CD4-positive, alpha-beta T cell (primary cell): ENCODE measurements at regions of chr4 and their contacts with region 1.

Region 1: DNA sequence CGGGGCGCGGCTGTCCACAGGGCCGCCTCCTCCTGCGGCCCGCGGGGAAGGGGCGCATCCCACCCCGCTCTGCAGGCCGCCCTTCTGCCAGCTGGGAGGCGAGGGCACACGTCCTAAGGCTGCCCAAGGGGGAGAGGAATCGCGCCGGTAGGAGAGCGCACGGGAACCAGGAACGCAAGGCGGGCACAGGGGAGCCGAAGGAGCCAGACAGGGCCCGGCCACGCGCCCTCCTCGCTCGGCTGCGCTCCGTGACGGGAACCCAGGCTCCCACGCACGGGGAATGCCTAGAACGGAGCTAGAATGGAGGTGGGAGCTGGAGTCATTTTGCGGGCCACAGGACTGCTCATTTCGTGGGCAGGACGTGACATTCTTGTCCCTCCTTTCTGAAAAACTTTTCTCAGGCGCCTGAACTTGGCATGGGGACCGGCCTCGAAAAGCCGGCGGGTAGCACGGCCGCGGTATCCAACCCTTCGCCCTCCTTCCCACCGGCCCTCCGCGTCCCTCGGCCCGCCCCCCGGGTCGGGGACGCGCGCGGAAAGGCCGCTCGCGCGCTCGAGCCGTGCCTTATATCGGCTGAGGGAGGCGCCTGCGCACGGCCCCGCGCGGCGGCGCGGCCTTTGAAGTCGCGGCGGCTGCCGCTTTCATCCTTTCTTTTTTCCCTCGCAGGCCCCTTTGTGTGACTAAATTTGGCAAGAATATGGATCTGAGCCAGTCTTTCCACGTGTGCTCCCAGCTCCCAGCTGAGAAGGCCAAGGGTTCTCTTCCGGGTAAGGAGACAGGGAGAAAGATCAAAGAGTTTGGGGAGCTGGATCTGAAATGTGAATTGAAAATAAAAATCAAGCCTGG is 4.2 kb upstream of the LEF1 start:
- DNase-seq: peak; percentile 51 to 87 (median 70)
- ATAC-seq: peak; percentile 39
- H3K4me3 ChIP-seq: peak overlapping the region; percentile 85
- H3K4me3 Mint-ChIP-seq: peak overlapping the region; percentile 93
- H3K27ac ChIP-seq: peak overlapping the region; percentile 46 to 91
- H3K27ac Mint-ChIP-seq: peak overlapping the region; percentile 88
- H3K4me1 ChIP-seq: peaks cover 50% of the 10 kb centered on the region
- H3K4me1 Mint-ChIP-seq: peaks cover 67% of the 10 kb centered on the region
- H3K27me3 ChIP-seq: peaks cover 7 to 11% of the 10 kb centered on the region in 2 experiments
- H3K27me3 Mint-ChIP-seq: peaks cover 9% of the 10 kb centered on the region
- CTCF ChIP-seq: no peak

Region 2: DNA sequence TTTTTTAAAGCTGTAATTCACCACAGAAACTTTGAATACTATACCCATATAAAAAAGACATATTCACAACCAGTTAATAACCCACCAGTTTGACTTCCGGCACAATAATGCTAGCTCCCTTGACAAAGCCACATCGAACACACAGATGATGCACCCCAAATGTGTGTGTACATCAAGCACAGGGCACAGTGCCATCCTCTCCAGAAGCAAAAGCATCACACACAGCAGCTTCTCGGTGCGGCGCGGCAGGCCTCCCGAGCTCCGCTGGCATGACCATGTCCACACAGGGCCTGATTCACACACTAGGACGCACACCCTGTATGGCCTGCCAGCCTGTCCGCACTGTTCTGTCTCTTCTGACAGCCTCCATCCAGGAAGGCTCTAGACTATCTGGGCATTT is 92.2 kb before region 1 on chr4:
- CTCF ChIA-PET with region 1: interaction called, 3 read pairs
- POLR2A ChIA-PET with region 1: interaction called, 13 read pairs
- intact Hi-C with region 1: no loop called
- DNase-seq: peak; percentile 35 to 77 (median 62)
- ATAC-seq: peak; percentile 84
- H3K4me3 ChIP-seq: no peak overlapping the region
- H3K4me3 Mint-ChIP-seq: peak overlapping the region; percentile 77
- H3K27ac ChIP-seq: peak overlapping the region in 1 of 2 donors; percentile 68
- H3K27ac Mint-ChIP-seq: peak overlapping the region; percentile 95
- H3K4me1 ChIP-seq: peaks cover 14% of the 10 kb centered on the region
- H3K4me1 Mint-ChIP-seq: peaks cover 78% of the 10 kb centered on the region
- H3K27me3 ChIP-seq: no peaks in the 10 kb centered on the region
- H3K27me3 Mint-ChIP-seq: no peaks in the 10 kb centered on the region
- CTCF ChIP-seq: no peak

Region 3: DNA sequence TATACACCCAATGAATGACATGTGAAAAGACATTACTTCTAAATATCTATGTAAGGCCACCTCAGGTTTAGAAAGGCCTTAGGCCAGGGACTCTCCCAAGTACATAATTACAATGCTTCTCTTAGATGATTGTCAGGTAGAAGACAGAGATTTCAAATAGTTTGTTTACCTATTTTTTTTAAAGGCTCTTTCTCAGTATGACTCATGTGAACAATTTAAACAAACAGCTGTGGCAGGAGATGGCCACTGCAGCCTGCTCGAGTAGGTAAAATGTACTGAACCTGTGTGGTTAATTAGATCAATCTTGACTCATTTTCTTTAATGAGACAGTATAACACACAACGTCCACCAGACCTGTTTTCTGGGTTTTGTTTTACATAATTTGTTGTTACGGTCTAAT is 54.5 kb before region 1 on chr4:
- CTCF ChIA-PET with region 1: interaction called, 3 read pairs
- POLR2A ChIA-PET with region 1: interaction called, 65 read pairs
- intact Hi-C with region 1: loop called (anchors 2 to 10 kb)
- DNase-seq: peak in 8 of 14 experiments; percentile 31 to 76 (median 50)
- ATAC-seq: peak; percentile 61
- H3K4me3 ChIP-seq: no peak overlapping the region
- H3K4me3 Mint-ChIP-seq: peak overlapping the region; percentile 72
- H3K27ac ChIP-seq: peak overlapping the region; percentile 58 to 89
- H3K27ac Mint-ChIP-seq: peak overlapping the region; percentile 92
- H3K4me1 ChIP-seq: peaks cover 49% of the 10 kb centered on the region
- H3K4me1 Mint-ChIP-seq: peaks cover 95% of the 10 kb centered on the region
- H3K27me3 ChIP-seq: no peaks in the 10 kb centered on the region
- H3K27me3 Mint-ChIP-seq: no peaks in the 10 kb centered on the region
- CTCF ChIP-seq: no peak

Region 4: GRCh38 chr4:108155373-108155772 is 17.6 kb before region 1 on chr4:
- CTCF ChIA-PET with region 1: interaction called, 7 read pairs
- POLR2A ChIA-PET with region 1: interaction called, 148 read pairs
- intact Hi-C with region 1: no loop called
- DNase-seq: peak in 6 of 14 experiments; percentile 40 to 79 (median 56)
- ATAC-seq: peak; percentile 62
- H3K4me3 ChIP-seq: peak overlapping the region; percentile 24
- H3K4me3 Mint-ChIP-seq: peak overlapping the region; percentile 87
- H3K27ac ChIP-seq: peak overlapping the region; percentile 10 to 61
- H3K27ac Mint-ChIP-seq: peak overlapping the region; percentile 79
- H3K4me1 ChIP-seq: peaks cover 37% of the 10 kb centered on the region
- H3K4me1 Mint-ChIP-seq: peaks cover 89% of the 10 kb centered on the region
- H3K27me3 ChIP-seq: no peaks in the 10 kb centered on the region
- H3K27me3 Mint-ChIP-seq: no peaks in the 10 kb centered on the region
- CTCF ChIP-seq: peak; percentile 44

Region 5: GRCh38 chr4:108355186-108355901 is 182.4 kb after region 1 on chr4:
- CTCF ChIA-PET with region 1: no interaction called
- POLR2A ChIA-PET with region 1: interaction called, 16 read pairs
- intact Hi-C with region 1: loop called in 1 of 2 experiments (anchors 2 kb)
- DNase-seq: peak in 8 of 14 experiments; percentile 36 to 86 (median 55)
- ATAC-seq: peak; percentile 86
- H3K4me3 ChIP-seq: no peak overlapping the region
- H3K4me3 Mint-ChIP-seq: peak overlapping the region; percentile 47
- H3K27ac ChIP-seq: peak overlapping the region; percentile 69
- H3K27ac Mint-ChIP-seq: peak overlapping the region; percentile 87
- H3K4me1 ChIP-seq: peaks cover 40% of the 10 kb centered on the region
- H3K4me1 Mint-ChIP-seq: peaks cover 78% of the 10 kb centered on the region
- H3K27me3 ChIP-seq: no peaks in the 10 kb centered on the region
- H3K27me3 Mint-ChIP-seq: no peaks in the 10 kb centered on the region
- CTCF ChIP-seq: no peak

Region 6: DNA sequence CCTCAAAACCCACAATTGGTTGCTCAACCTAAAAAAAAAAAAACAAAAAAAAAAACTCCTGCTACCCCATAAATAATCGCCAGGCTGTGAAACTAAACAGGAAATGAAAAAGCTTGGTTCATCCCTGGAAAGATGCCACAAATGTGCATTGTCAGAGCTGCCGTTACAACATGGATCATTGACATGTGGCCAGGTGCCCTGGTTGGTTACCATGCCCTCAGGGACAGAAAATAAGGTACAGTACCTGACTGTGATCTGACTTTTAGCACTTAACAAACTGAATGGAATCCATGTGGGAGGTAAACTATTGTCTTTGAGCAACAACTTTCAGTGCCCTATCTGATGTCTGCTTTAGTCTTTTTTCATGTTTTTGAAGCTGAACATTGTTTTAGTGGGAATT is 329.4 kb after region 1 on chr4:
- CTCF ChIA-PET with region 1: no interaction called
- POLR2A ChIA-PET with region 1: no interaction called
- intact Hi-C with region 1: no loop called
- DNase-seq: no peak
- ATAC-seq: no peak
- H3K4me3 ChIP-seq: no peak overlapping the region
- H3K4me3 Mint-ChIP-seq: no peak overlapping the region
- H3K27ac ChIP-seq: no peak overlapping the region
- H3K27ac Mint-ChIP-seq: no peak overlapping the region
- H3K4me1 ChIP-seq: no peaks in the 10 kb centered on the region
- H3K4me1 Mint-ChIP-seq: peaks cover 11% of the 10 kb centered on the region
- H3K27me3 ChIP-seq: no peaks in the 10 kb centered on the region
- H3K27me3 Mint-ChIP-seq: no peaks in the 10 kb centered on the region
- CTCF ChIP-seq: no peak

Region 7: GRCh38 chr4:108512615-108513505 is 339.9 kb after region 1 on chr4:
- CTCF ChIA-PET with region 1: no interaction called
- POLR2A ChIA-PET with region 1: interaction called, 6 read pairs
- intact Hi-C with region 1: loop called (anchors 5 kb)
- DNase-seq: peak; percentile 11 to 76 (median 42)
- ATAC-seq: peak; percentile 95
- H3K4me3 ChIP-seq: no peak overlapping the region
- H3K4me3 Mint-ChIP-seq: peak overlapping the region; percentile 78
- H3K27ac ChIP-seq: no peak overlapping the region
- H3K27ac Mint-ChIP-seq: no peak overlapping the region
- H3K4me1 ChIP-seq: peaks cover 3% of the 10 kb centered on the region
- H3K4me1 Mint-ChIP-seq: peaks cover 21% of the 10 kb centered on the region
- H3K27me3 ChIP-seq: no peaks in the 10 kb centered on the region
- H3K27me3 Mint-ChIP-seq: no peaks in the 10 kb centered on the region
- CTCF ChIP-seq: peak; percentile 29